Lower lobe of right lung (tissue), 2 donors: ENCODE measurements at regions of chr12 and their contacts with region 1.

Region 1: GRCh38 chr12:55619354-55620138 is 17.1 kb upstream of the OR10P1 start:
- DNase-seq: no peak
- ATAC-seq: peak; percentile 94 to 95
- H3K4me3 ChIP-seq: no peak overlapping the region
- H3K27ac ChIP-seq: no peak overlapping the region
- H3K4me1 ChIP-seq: no peaks in the 10 kb centered on the region
- H3K27me3 ChIP-seq: no peaks in the 10 kb centered on the region
- CTCF ChIP-seq: peak; percentile 81

Region 2: DNA sequence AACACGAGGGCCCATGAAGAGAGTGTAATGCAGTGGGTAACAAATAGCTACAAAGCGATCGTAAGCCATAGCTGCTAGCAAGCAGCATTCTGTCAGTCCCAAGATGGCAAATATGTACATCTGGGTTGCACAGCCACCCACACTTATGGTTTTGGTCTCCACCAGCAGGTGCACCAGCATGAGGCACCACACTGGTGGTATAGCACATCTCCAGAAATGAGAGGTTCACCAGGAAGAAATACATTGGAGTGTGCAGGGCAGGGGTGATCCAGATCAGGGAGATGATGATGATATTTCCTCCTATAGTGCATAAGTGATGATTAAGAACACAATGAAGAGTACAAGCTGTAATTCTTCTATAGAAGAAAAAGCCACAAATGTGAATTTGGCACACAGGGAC is 425.2 kb before region 1 on chr12:
- intact Hi-C with region 1: loop called (anchors 5 kb)
- DNase-seq: no peak
- ATAC-seq: no peak
- H3K4me3 ChIP-seq: no peak overlapping the region
- H3K27ac ChIP-seq: no peak overlapping the region
- H3K4me1 ChIP-seq: no peaks in the 10 kb centered on the region
- H3K27me3 ChIP-seq: no peaks in the 10 kb centered on the region
- CTCF ChIP-seq: no peak

Region 3: DNA sequence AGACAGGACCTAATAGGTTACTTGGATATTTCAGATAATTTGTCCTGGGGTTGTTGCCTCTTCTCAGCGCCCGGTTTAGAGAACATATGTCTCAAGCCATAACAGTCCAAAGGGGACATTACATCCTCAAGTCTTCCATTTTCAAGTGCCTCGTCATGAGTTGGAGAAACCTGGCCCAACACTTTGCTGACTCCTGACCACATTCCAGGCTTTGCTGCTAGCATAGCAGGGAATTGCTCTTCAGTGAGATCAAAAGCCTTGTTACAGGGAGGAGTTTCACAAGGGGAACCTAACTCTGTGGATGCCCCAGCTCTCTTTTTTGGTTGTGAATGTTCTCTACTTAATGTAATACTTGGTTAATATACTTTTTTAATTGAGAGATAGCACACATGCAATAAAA is 231.3 kb after region 1 on chr12:
- intact Hi-C with region 1: no loop called
- DNase-seq: no peak
- ATAC-seq: no peak
- H3K4me3 ChIP-seq: no peak overlapping the region
- H3K27ac ChIP-seq: no peak overlapping the region
- H3K4me1 ChIP-seq: peaks cover 14% of the 10 kb centered on the region
- H3K27me3 ChIP-seq: no peaks in the 10 kb centered on the region
- CTCF ChIP-seq: no peak

Region 4: DNA sequence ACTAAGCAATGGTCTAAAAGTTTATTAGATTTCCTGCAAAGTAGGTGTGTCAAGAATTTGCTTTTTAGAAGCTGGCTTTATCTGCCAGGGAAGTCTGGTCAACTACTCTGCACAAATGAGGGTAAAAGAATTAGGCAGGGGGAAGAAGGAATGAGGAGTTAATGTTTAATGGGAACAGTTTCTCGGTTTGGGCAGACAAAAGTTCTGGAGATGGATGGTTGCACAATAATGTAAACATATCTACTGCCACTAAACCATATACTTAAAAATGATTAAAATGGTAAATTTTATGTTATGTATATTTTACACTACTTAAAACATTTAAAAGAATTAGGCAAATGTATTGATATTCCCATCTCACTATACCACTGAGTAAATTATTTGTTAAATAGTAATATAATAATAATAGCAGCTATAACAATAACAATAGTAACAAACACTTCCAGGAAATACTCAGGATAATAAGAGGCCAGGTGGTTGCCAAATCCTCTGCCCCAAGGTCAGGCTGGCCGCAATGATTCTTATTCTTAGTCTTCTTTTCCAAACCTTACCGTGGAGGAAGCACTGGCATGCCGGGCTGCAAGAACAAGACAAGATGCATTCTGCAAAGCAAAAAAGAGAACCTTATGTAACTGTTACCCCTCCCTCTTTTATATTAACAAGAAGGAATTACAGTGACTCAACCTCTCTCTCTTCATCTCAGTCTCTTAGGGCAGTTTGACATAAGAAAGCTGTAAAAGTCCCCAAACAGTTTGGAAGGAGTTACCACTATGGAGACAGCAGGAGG is 666.7 kb after region 1 on chr12:
- intact Hi-C with region 1: no loop called
- DNase-seq: no peak
- ATAC-seq: peak; percentile 34 to 52
- H3K4me3 ChIP-seq: no peak overlapping the region
- H3K27ac ChIP-seq: peak overlapping the region; percentile 18
- H3K4me1 ChIP-seq: peaks cover 40% of the 10 kb centered on the region
- H3K27me3 ChIP-seq: no peaks in the 10 kb centered on the region
- CTCF ChIP-seq: no peak